Dorsolateral prefrontal cortex (tissue), 120 donors: ENCODE measurements at regions of chr12 and their contacts with region 1.

Region 1: DNA sequence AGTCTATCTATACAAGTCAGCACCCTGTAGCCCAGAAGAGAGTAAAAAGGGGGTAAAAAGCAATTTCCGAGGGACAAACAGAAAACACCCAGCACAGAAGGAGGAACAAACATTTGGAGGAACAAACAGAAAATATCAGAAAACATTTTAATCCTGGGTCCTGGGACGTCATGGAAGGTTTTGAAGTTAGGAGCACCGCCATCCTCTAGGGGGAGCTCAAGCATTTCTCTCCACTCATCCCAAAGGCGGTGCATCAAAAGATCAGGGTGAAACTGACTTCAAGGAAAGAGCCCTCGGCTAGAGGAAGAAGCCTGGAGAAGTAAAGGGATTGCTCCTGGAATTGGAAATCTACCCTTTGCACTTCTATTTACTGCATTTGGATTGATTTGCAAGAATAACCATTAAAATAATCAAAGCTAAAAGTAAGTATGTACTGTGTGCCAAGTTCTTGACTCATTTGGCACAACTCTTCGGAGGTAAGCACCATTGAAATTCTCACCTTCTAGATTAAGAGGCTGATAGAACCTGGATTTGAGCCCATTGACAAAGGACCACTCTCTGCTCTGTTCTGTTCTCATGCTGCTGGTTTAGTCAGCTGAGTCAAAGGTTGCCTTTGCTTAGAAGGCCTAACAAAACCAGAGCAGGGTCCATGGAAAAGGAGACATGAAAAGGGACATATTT is 17.2 kb upstream of the POC1B start:
- DNase-seq: peak in 8 of 10 donors; percentile 50 to 77 (median 59)
- H3K4me3 ChIP-seq: peak overlapping the region in 1 of 59 donors; percentile 3
- H3K27ac ChIP-seq: peak overlapping the region in 11 of 59 donors; percentile 7 to 69 (median 42)
- H3K27me3 ChIP-seq: no peaks in the 10 kb centered on the region
- CTCF ChIP-seq: peak; percentile 75 to 95 (median 87)

Region 2: DNA sequence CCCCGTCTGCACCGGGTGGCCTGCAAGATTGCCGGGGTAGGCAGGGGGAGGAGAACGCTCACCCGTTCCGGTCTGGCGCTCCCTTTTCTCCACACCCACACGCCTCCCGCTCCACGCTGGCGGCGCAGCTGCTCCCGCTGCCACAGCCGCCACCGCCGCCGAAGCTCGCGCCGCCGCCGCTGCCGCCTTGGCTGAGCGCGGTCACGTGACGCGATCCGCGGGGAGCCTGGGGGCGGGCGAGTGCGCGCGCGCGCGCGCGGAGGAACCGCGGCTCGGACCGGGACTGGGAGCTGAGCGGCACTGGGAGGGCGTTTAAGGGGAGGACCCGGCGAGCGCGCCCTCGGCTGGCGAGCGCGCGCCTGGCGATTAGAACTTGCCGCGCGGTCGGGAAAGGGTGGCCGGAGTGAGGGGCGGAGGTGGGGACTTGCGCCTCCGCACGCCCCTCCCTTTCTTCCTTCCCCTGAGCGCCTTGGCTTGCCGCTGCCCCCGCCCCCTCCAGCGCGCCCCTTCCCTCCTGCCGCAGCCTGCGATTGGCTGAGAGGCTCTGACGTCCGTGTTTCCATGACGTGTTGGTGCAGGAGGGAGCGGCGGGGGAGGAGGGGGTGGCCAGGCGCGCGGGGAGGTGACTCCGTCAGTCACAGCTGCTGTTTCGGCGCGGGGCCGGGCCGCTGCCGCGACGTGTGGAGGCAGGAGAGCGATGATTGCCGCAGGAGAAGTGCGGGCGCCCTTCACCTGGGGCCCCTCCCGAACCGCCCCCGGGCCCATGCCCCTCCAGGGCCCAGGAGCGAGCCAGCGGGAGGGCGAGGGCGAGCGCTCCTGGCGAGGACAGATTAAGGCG is 166.3 kb after region 1 on chr12:
- intact Hi-C with region 1: loop called in 1 of 2 experiments (anchors 5 kb)
- DNase-seq: peak; percentile 95 to 98 (median 96)
- H3K4me3 ChIP-seq: peak overlapping the region; percentile 64 to 99 (median 91)
- H3K27ac ChIP-seq: peak overlapping the region; percentile 73 to 100 (median 98)
- H3K27me3 ChIP-seq: no peaks in the 10 kb centered on the region
- CTCF ChIP-seq: peak in 19 of 56 donors; percentile 5 to 51 (median 15)

Region 3: GRCh38 chr12:90102957-90103652 is 560.1 kb after region 1 on chr12:
- intact Hi-C with region 1: loop called (anchors 5 to 10 kb)
- DNase-seq: peak in 1 of 10 donors; percentile 15
- H3K4me3 ChIP-seq: no peak overlapping the region
- H3K27ac ChIP-seq: no peak overlapping the region
- H3K27me3 ChIP-seq: no peaks in the 10 kb centered on the region
- CTCF ChIP-seq: peak in 52 of 56 donors; percentile 18 to 66 (median 47)

Region 4: GRCh38 chr12:90854136-90854689 is 1311.2 kb after region 1 on chr12:
- intact Hi-C with region 1: loop called in 1 of 2 experiments (anchors 5 kb)
- DNase-seq: peak in 3 of 10 donors; percentile 9 to 58 (median 31)
- H3K4me3 ChIP-seq: peak overlapping the region in 3 of 59 donors; percentile 2 to 7 (median 5)
- H3K27ac ChIP-seq: peak overlapping the region in 31 of 59 donors; percentile 2 to 80 (median 64)
- H3K27me3 ChIP-seq: no peaks in the 10 kb centered on the region
- CTCF ChIP-seq: peak; percentile 63 to 86 (median 74)

Region 5: GRCh38 chr12:90940872-90941499 is 1397.9 kb after region 1 on chr12:
- intact Hi-C with region 1: loop called in 1 of 2 experiments (anchors 10 kb)
- DNase-seq: no peak
- H3K4me3 ChIP-seq: no peak overlapping the region
- H3K27ac ChIP-seq: no peak overlapping the region
- H3K27me3 ChIP-seq: no peaks in the 10 kb centered on the region
- CTCF ChIP-seq: peak in 55 of 56 donors; percentile 18 to 69 (median 50)

Region 6: GRCh38 chr12:90959538-90960139 is 1416.6 kb after region 1 on chr12:
- intact Hi-C with region 1: loop called in 1 of 2 experiments (anchors 5 kb)
- DNase-seq: peak in 2 of 10 donors; percentile 32 to 42
- H3K4me3 ChIP-seq: peak overlapping the region in 3 of 59 donors; percentile 14 to 24 (median 23)
- H3K27ac ChIP-seq: no peak overlapping the region
- H3K27me3 ChIP-seq: no peaks in the 10 kb centered on the region
- CTCF ChIP-seq: peak; percentile 39 to 82 (median 72)